ENCODE measurements at regions of chrX and their contacts with region 1.

Region 1: GRCh38 chrX:135112096-135112729 is 8.1 kb downstream of the ETDB start:
- DNase-seq: no peak
- ATAC-seq: peak; percentile 59
- H3K4me3 Mint-ChIP-seq: no peak overlapping the region
- H3K27ac Mint-ChIP-seq: no peak overlapping the region
- H3K4me1 Mint-ChIP-seq: peaks cover 11% of the 10 kb centered on the region
- H3K27me3 Mint-ChIP-seq: peaks cover 13% of the 10 kb centered on the region
- CTCF ChIP-seq: no peak

Region 2: DNA sequence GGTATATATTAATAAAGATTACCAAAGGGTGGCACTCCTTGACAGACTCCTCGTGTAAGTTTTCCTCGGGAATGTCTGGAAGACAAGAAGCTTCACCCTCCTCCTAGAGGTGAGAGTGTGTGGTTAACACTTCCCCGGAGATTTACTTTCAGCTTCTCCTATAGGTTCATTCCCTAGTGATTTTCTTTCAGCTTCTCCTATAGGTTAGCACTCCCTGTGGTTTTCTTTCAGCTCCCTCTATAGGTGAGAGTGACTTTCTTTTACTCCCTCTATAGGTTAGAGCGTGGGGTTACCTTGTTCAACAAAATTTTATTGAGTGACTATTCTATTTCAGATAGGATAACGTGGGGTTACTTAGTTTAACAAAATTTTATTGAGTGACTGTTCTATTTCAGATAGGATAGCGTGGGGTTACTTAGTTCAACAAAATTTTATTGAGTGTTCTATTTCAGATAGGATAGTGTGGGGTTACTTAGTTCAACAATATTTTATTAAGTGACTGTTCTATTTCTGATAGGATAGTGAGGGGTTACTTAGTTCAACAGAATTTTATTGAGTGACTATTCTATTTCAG is 347.9 kb before region 1 on chrX:
- CTCF ChIA-PET with region 1: no interaction called
- POLR2A ChIA-PET with region 1: no interaction called
- intact Hi-C with region 1: no loop called
- DNase-seq: no peak
- ATAC-seq: peak; percentile 60
- H3K4me3 Mint-ChIP-seq: no peak overlapping the region
- H3K27ac Mint-ChIP-seq: no peak overlapping the region
- H3K4me1 Mint-ChIP-seq: no peaks in the 10 kb centered on the region
- H3K27me3 Mint-ChIP-seq: no peaks in the 10 kb centered on the region
- CTCF ChIP-seq: no peak

Region 3: DNA sequence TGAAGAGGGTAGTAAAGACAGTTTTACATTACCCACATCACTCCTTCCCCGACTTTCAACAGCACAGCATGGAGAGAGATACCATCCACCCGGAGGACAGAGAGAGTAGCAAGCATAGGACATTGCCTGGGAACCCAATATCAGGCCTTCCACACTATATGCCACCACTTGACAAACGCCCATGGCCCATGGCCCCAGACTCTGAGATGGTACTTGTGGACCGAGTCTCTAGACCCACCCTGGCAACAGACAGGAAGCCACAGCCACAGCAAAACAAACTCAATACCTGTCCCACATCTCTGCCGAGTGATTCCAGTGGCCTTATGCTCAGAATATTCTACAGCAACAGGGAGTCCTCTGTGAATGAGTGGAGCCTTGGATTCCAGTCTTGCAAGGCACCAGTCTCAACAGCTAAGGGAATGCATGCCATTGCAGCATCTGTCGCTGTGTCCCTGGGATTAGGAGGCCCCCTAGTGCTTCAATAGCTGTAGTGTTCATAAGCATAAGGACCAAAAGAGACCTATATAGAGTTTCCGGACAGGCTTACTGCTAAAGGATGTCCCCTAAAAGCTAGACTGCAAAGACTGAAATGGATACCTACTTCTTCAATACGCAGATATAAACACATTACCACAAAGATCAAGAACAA is 73.7 kb after region 1 on chrX:
- CTCF ChIA-PET with region 1: interaction called, 29 read pairs
- POLR2A ChIA-PET with region 1: no interaction called
- intact Hi-C with region 1: loop called (anchors 1 kb)
- DNase-seq: no peak
- ATAC-seq: peak; percentile 70
- H3K4me3 Mint-ChIP-seq: no peak overlapping the region
- H3K27ac Mint-ChIP-seq: no peak overlapping the region
- H3K4me1 Mint-ChIP-seq: no peaks in the 10 kb centered on the region
- H3K27me3 Mint-ChIP-seq: peaks cover 14% of the 10 kb centered on the region
- CTCF ChIP-seq: no peak

Region 4: DNA sequence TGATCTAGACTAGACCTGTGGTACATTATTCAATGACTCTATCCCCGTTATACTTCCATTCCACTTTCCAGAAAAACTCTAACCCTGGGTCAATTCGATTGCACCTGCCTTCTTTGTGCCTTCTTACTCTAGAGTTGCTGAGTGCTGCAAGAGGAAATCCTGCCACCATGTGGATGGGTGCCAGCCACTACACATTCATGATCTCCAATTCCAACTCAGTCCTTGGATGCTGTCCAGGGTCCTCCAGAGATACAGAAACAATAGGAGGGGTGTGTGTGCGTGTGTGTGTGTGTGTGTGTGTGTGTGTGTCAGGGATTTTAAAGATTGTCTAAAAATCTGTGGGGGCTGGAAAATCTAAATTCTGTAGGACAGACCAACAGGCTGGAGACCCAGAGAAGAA is 365.4 kb after region 1 on chrX:
- CTCF ChIA-PET with region 1: no interaction called
- POLR2A ChIA-PET with region 1: no interaction called
- intact Hi-C with region 1: loop called (anchors 10 kb)
- DNase-seq: no peak
- ATAC-seq: no peak
- H3K4me3 Mint-ChIP-seq: no peak overlapping the region
- H3K27ac Mint-ChIP-seq: no peak overlapping the region
- H3K4me1 Mint-ChIP-seq: no peaks in the 10 kb centered on the region
- H3K27me3 Mint-ChIP-seq: peaks cover 3% of the 10 kb centered on the region
- CTCF ChIP-seq: no peak